IMR-90 (cell line): ENCODE measurements at regions of chr2 and their contacts with region 1.

Region 1: GRCh38 chr2:132267105-132267497 is 105.3 kb upstream of the ANKRD30BL start:
- DNase-seq: no peak
- ATAC-seq: no peak
- H3K4me3 ChIP-seq: no peak overlapping the region
- H3K27ac ChIP-seq: no peak overlapping the region
- H3K4me1 ChIP-seq: no peaks in the 10 kb centered on the region
- H3K27me3 ChIP-seq: peaks cover 4% of the 10 kb centered on the region; the same call in 1 of the 2 replicates
- CTCF ChIP-seq: no peak
- POLR2A ChIP-seq: no peak
- RAD21 ChIP-seq: no peak

Region 2: GRCh38 chr2:132448771-132449170 is 181.7 kb after region 1 on chr2:
- CTCF ChIA-PET with region 1: no interaction called
- POLR2A ChIA-PET with region 1: no interaction called
- dilution Hi-C with region 1: no loop called
- in situ Hi-C with region 1: no loop called
- intact Hi-C with region 1: loop called (anchors 5 kb)
- DNase-seq: peak; percentile 55
- ATAC-seq: peak; percentile 90
- H3K4me3 ChIP-seq: no peak overlapping the region
- H3K27ac ChIP-seq: no peak overlapping the region
- H3K4me1 ChIP-seq: peaks cover 4% of the 10 kb centered on the region; the same call in 1 of the 2 replicates
- H3K27me3 ChIP-seq: no peaks in the 10 kb centered on the region
- CTCF ChIP-seq: peak; percentile 75
- POLR2A ChIP-seq: no peak
- RAD21 ChIP-seq: peak; percentile 74

Region 3: DNA sequence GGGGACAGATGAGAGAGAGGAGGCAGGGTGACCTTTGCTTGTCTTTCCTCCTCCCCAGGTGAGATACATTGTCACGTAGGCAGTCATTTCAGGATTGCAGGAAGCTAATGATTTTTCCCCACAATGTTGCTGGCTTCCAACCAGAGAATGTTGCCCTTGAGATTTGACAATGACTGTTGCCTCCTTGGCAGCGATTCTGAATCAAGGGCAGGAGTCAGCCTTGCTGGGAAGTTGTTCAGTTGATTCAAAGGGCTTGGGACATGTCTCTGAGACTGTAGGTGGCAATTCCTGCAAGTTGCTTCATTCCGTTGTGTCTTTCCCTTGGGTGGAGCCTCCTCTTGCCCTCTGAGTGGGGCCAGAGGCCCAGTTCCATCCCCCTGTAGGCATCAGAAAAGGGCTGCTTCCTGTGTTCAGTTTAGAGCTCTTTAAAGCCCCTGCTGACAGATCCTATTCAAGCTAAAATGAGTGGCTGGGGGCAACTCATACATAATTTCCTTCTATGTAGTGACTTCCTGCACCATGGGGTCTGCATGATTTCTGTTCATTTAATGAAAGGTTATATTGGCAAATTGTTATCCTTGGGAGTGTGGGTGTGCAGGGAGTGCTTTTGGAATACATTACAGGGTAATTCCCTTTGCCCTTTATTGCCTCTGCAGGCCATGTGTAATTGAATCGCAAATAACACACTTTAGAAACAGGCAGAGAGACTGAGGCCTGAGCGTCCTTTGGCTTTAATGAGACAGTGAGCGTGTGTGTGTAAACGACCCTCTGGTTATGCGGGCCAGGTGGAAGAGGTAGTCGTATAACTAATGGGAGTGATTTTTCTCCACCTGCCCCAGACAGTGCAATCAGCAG is 201.9 kb after region 1 on chr2:
- CTCF ChIA-PET with region 1: no interaction called
- POLR2A ChIA-PET with region 1: no interaction called
- dilution Hi-C with region 1: no loop called
- in situ Hi-C with region 1: no loop called
- intact Hi-C with region 1: no loop called
- DNase-seq: no peak
- ATAC-seq: no peak
- H3K4me3 ChIP-seq: no peak overlapping the region
- H3K27ac ChIP-seq: no peak overlapping the region
- H3K4me1 ChIP-seq: no peaks in the 10 kb centered on the region
- H3K27me3 ChIP-seq: no peaks in the 10 kb centered on the region
- CTCF ChIP-seq: no peak
- POLR2A ChIP-seq: no peak
- RAD21 ChIP-seq: no peak

Region 4: DNA sequence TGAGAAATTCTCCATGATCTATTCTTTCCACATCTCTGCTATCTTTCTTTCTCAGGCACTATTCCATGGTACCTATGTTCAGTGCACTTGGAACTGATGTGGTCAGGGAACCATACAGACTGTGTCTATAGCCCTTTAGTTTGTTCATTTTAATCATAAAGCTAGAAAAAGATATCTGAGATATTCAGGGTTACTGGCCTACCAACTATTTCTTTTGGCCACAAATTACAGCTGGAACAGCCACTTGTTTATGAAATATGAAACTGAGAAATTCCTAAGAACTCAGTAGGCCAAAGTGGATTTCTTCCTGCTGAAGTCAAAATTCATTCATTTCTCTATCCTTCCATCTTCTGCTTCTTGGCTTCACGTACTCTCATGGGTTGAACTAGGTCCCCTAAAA is 425.7 kb after region 1 on chr2:
- CTCF ChIA-PET with region 1: no interaction called
- POLR2A ChIA-PET with region 1: no interaction called
- dilution Hi-C with region 1: no loop called
- in situ Hi-C with region 1: no loop called
- intact Hi-C with region 1: no loop called
- DNase-seq: peak; percentile 57
- ATAC-seq: peak; percentile 18; the same call in 1 of the 2 replicates
- H3K4me3 ChIP-seq: no peak overlapping the region
- H3K27ac ChIP-seq: peak overlapping the region; percentile 44; the same call in 1 of the 2 replicates
- H3K4me1 ChIP-seq: peaks cover 16% of the 10 kb centered on the region
- H3K27me3 ChIP-seq: no peaks in the 10 kb centered on the region
- CTCF ChIP-seq: no peak
- POLR2A ChIP-seq: no peak
- RAD21 ChIP-seq: no peak

Region 5: DNA sequence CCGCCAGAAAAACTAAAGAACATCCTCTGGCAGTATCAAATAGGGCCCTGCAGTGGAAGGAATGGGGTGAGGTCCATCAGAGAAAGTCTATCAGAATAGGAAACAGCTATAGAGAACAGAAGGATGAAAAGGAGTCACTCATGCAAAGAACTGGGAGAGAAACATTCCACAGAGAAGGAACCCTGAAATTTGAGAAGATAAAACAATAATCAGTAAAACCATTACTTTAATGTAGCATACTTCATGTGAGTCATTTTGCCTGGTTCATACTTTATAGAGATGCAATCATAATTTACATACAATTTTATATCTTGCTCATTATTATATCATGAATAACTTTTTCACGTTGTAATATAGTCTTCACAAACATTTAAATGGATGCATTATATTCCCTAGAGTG is 898.9 kb after region 1 on chr2:
- CTCF ChIA-PET with region 1: no interaction called
- POLR2A ChIA-PET with region 1: no interaction called
- dilution Hi-C with region 1: no loop called
- in situ Hi-C with region 1: no loop called
- intact Hi-C with region 1: loop called (anchors 10 kb)
- DNase-seq: peak; percentile 69
- ATAC-seq: peak; percentile 78
- H3K4me3 ChIP-seq: no peak overlapping the region
- H3K27ac ChIP-seq: peak overlapping the region; percentile 57; the same call in 1 of the 2 replicates
- H3K4me1 ChIP-seq: peaks cover 14% of the 10 kb centered on the region
- H3K27me3 ChIP-seq: no peaks in the 10 kb centered on the region
- CTCF ChIP-seq: no peak
- POLR2A ChIP-seq: no peak
- RAD21 ChIP-seq: no peak